Body of pancreas (tissue), 4 donors: ENCODE measurements at regions of chr4 and their contacts with region 1.

Region 1: DNA sequence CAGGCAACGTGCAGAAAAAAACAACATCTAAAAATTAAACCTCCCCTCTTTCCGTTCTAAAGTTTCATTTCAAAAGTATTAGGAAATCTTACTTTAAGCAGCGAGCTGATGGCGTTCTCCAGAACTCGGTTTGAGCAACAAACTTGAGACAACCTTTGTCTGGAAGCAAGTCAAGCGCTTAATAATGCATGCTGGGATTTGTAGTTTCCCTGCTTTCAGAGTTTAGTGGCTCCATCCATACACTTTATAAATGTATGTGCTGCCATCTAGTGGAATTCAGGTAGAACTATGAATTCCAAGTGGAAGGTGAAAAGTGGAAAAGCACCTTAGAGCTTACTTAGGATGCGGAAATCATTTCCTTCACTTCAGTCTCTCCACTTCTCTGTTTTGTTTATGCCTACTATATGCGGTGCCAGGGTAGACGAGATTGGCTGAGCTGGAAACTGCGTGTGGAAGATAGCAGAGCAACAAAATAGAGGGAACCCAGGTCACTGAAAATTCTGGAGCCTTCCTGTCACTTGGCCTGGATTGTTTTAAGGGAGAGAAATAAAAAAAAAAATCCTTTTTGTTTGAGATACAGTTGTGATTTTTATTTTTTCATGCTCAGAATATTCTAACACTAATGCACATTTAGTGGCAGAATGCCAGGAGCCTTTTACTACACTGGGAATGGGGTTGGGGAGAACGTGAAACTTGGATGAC is at the start of gene BDH2:
- DNase-seq: peak; percentile 53 to 88 (median 66)
- ATAC-seq: peak; percentile 99
- H3K4me3 ChIP-seq: peak within 1 kb of the TSS in 1 of 2 donors; percentile 10
- H3K27ac ChIP-seq: peak within 1 kb of the TSS in 2 of 4 donors; percentile 22 to 57
- H3K4me1 ChIP-seq: peaks cover 34% of the 10 kb centered on the region
- H3K27me3 ChIP-seq: no peaks in the 10 kb centered on the region
- CTCF ChIP-seq: peak; percentile 50 to 95 (median 90)
- POLR2A ChIP-seq: peak in 2 of 3 donors; percentile 35 to 37
- total RNA-seq, gene BDH2: 25.4 to 40.2 TPM

Region 2: GRCh38 chr4:102449751-102450352 is 650.0 kb before region 1 on chr4:
- intact Hi-C with region 1: loop called (anchors 10 kb)
- DNase-seq: peak; percentile 43 to 69 (median 50)
- ATAC-seq: peak; percentile 66
- H3K4me3 ChIP-seq: no peak overlapping the region
- H3K27ac ChIP-seq: no peak overlapping the region
- H3K4me1 ChIP-seq: no peaks in the 10 kb centered on the region
- H3K27me3 ChIP-seq: no peaks in the 10 kb centered on the region
- CTCF ChIP-seq: peak; percentile 36 to 78 (median 73)
- POLR2A ChIP-seq: no peak

Region 3: DNA sequence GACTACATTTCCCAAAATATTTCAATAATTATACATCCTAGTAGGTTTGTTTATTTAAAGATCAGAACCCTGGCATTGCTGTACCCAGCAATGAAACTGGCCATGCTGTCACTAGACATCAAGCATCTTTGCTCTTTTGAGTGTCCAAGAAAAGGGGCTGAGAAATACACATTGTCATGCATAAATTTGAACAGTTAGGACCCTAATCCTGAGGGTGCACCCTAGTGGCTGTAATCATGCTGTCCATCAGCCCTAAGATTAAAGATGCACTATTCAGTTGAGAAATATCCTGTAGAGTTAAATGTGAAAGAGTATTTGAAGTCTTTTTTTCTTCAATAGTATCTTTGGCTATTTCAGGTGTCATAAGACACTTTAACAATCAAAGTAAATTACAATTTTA is 489.8 kb before region 1 on chr4:
- intact Hi-C with region 1: loop called (anchors 10 kb)
- DNase-seq: no peak
- ATAC-seq: no peak
- H3K4me3 ChIP-seq: no peak overlapping the region
- H3K27ac ChIP-seq: no peak overlapping the region
- H3K4me1 ChIP-seq: no peaks in the 10 kb centered on the region
- H3K27me3 ChIP-seq: no peaks in the 10 kb centered on the region
- CTCF ChIP-seq: no peak
- POLR2A ChIP-seq: no peak

Region 4: GRCh38 chr4:103329642-103330041 is 229.8 kb after region 1 on chr4:
- intact Hi-C with region 1: no loop called
- DNase-seq: no peak
- ATAC-seq: no peak
- H3K4me3 ChIP-seq: no peak overlapping the region
- H3K27ac ChIP-seq: no peak overlapping the region
- H3K4me1 ChIP-seq: no peaks in the 10 kb centered on the region
- H3K27me3 ChIP-seq: no peaks in the 10 kb centered on the region
- CTCF ChIP-seq: no peak
- POLR2A ChIP-seq: no peak